Ascending aorta (tissue), 2 donors: ENCODE measurements at regions of chr16 and their contacts with region 1.

Region 1: GRCh38 chr16:83952940-83953795 is at the start of gene OSGIN1:
- DNase-seq: peak; percentile 87 to 98
- H3K4me3 ChIP-seq: peak within 1 kb of the TSS; percentile 64 to 76
- H3K27ac ChIP-seq: peak within 1 kb of the TSS; percentile 89 to 94
- H3K4me1 ChIP-seq: peaks cover 8 to 22% of the 10 kb centered on the region in 2 donors
- H3K27me3 ChIP-seq: no peaks in the 10 kb centered on the region
- CTCF ChIP-seq: no peak
- total RNA-seq, gene OSGIN1: 7.8 TPM

Region 2: GRCh38 chr16:83898463-83899271 is 54.5 kb before region 1 on chr16 and contains the start of gene MLYCD:
- intact Hi-C with region 1: loop called (anchors 2 kb)
- DNase-seq: peak; percentile 50 to 90
- H3K4me3 ChIP-seq: peak within 1 kb of the TSS; percentile 95 to 97
- H3K27ac ChIP-seq: peak within 1 kb of the TSS; percentile 94 to 98
- H3K4me1 ChIP-seq: peaks cover 3 to 13% of the 10 kb centered on the region in 2 donors
- H3K27me3 ChIP-seq: no peaks in the 10 kb centered on the region
- CTCF ChIP-seq: peak in 1 of 3 experiments; percentile 4
- total RNA-seq, gene MLYCD: 13.4 TPM

Region 3: DNA sequence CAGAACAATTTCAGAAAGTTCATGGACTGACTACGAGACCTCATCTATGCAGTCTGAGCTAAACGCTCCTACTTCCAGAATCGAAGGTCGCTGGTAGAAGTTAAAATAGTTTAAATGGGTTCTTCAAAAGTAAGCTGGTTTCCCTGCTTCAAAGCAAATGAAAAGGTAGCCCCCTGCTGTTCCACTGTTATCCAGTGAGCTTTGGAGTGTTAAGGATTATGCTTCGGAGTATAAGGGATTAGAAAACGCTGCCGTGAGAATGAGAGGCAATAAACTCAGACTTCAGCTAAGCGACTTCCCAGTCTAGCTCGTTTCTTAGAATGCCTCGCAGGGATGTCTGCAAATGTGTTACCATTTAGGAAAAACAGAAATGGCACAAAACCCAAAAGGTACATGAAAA is 41.9 kb before region 1 on chr16:
- intact Hi-C with region 1: no loop called
- DNase-seq: no peak
- H3K4me3 ChIP-seq: no peak overlapping the region
- H3K27ac ChIP-seq: no peak overlapping the region
- H3K4me1 ChIP-seq: no peaks in the 10 kb centered on the region
- H3K27me3 ChIP-seq: no peaks in the 10 kb centered on the region
- CTCF ChIP-seq: no peak

Region 4: DNA sequence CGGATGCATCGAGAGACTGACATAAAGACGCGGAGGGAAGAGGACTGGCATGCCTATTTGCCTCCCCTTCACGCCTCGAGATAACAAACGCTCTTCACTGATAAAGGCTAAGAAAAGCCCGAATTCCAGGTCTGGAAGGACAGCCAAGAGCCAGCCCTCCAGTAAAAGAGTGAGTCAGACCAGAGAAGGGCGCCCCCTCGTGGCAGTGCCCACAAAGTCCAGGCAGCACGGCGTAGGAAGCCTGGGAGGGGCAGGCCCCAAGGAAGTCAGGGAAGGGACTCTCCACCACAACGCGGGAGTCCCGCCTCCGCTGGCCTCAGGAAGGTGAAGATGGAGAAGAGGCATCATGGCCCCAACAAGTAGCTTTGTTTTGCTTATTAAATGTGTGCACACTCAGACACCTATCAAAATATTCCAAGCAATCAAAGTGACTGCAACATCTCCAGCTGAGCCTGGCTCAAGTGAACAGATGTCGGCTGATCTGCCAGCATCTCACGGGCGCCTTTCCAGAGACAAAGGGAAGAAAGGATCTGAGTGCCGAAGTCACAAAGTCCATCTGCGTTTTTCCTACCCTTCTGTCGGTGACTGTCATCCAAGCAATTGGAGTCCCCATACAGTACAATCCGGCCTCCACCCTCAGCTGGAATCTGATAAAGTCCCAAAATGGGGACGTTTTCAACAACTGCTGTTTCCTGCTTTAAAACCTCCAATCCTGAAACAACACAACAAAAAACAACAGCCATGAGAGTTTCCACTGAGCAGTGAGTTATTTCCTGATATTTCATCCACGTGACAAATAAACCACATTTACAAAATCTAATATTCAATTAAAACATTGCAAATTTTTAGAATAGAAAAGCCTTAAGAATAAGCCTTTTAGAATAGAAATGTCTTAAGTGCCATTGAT is 109.8 kb after region 1 on chr16:
- intact Hi-C with region 1: loop called (anchors 1 kb)
- DNase-seq: peak; percentile 26 to 86
- H3K4me3 ChIP-seq: no peak overlapping the region
- H3K27ac ChIP-seq: no peak overlapping the region
- H3K4me1 ChIP-seq: no peaks in the 10 kb centered on the region
- H3K27me3 ChIP-seq: no peaks in the 10 kb centered on the region
- CTCF ChIP-seq: peak; percentile 64 to 80 (median 80)

Region 5: DNA sequence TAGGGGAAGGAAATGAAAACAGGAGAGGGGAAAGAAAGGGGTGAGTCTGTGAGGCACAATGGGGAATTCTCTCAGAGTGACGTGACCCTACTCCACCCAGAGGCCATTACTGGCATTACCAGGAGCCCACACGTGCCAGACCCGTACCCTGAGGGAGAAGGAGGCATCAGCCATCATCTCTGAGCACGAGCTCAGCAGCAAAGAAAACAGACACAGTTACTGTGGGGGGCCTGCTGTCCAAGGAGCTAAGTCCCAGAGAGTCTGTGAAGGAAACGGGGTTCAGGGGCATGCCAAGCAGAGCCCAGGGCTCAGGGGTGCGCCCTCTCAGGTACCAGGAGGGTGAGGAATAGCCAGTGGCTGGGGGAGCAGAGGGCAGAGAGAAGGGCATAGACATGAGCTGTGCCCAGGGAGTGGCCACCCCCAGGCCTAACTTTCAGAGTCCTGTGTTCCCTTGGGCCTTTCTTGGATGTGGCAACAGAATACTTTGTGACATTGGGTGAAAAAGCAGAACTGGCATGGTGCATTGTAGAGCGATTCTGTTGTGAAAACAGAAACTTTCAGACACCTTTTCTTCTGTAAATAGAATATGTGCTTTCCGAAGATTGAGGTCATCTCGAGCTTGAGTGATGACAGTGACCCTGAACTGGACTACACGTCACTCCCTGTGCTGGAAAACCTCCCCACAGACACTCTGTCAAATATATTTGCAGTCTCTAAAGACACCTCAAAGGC is 222.3 kb after region 1 on chr16:
- intact Hi-C with region 1: loop called (anchors 5 kb)
- DNase-seq: no peak
- H3K4me3 ChIP-seq: no peak overlapping the region
- H3K27ac ChIP-seq: peak overlapping the region in 1 of 2 donors; percentile 74
- H3K4me1 ChIP-seq: peaks cover 6 to 21% of the 10 kb centered on the region in 2 donors
- H3K27me3 ChIP-seq: no peaks in the 10 kb centered on the region
- CTCF ChIP-seq: peak; percentile 21 to 67 (median 65)